ENCODE measurements at regions of chr1 and their contacts with region 1.

Region 1: GRCh38 chr1:192793983-192794767 is 14.7 kb upstream of the RGS2 start:
- DNase-seq: no peak
- H3K4me3 ChIP-seq: no peak overlapping the region
- H3K27ac ChIP-seq: no peak overlapping the region
- H3K4me1 ChIP-seq: no peaks in the 10 kb centered on the region
- H3K27me3 ChIP-seq: no peaks in the 10 kb centered on the region
- CTCF ChIP-seq: no peak
- POLR2A ChIP-seq: no peak

Region 2: GRCh38 chr1:192609110-192610079 is 184.8 kb before region 1 on chr1:
- intact Hi-C with region 1: loop called in 1 of 2 experiments (anchors 10 kb)
- DNase-seq: peak; percentile 22 to 69 (median 57)
- H3K4me3 ChIP-seq: no peak overlapping the region
- H3K27ac ChIP-seq: no peak overlapping the region
- H3K4me1 ChIP-seq: peaks cover 0 to 21% of the 10 kb centered on the region in 2 donors
- H3K27me3 ChIP-seq: no peaks in the 10 kb centered on the region
- CTCF ChIP-seq: no peak
- POLR2A ChIP-seq: no peak

Region 3: GRCh38 chr1:192974701-192975100 is 180.5 kb after region 1 on chr1:
- intact Hi-C with region 1: no loop called
- DNase-seq: no peak
- H3K4me3 ChIP-seq: no peak overlapping the region
- H3K27ac ChIP-seq: no peak overlapping the region
- H3K4me1 ChIP-seq: no peaks in the 10 kb centered on the region
- H3K27me3 ChIP-seq: no peaks in the 10 kb centered on the region
- CTCF ChIP-seq: no peak
- POLR2A ChIP-seq: no peak

Region 4: DNA sequence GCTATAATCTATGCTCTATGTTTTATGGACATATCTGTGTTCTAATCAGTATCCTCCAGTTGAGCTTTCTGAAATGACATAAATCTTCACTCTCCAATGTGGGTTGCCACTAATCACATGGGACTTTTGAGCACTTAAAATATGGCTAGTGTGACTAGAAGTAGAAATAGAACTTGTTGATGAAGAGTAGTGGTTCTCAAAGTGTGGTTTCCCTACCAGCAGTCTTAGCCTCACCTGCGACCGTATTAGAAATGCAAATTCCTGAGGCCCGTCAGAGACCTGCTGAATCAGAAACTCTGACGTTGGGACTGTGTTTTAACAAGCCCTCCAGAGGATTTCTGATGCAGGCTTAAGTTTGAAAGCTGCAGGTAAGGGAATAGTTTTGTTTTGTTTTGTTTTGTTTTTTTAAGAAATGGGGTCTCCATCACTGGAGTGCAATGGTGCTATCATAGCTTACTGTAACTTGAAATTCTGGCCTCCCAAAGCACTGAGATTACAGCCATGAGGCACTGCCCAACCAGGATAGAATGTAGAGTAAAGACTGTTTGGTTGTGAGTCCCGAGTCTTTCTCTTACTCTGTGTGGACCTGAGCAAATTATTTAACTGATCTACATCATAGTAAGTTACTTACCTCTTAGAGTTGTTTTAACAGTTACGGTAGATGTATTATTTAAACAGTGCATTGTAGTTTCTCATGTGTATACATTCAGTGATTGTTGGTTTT is 289.4 kb after region 1 on chr1:
- intact Hi-C with region 1: no loop called
- DNase-seq: no peak
- H3K4me3 ChIP-seq: no peak overlapping the region
- H3K27ac ChIP-seq: no peak overlapping the region
- H3K4me1 ChIP-seq: no peaks in the 10 kb centered on the region
- H3K27me3 ChIP-seq: no peaks in the 10 kb centered on the region
- CTCF ChIP-seq: no peak
- POLR2A ChIP-seq: no peak